Endothelial cell of umbilical vein (primary cell): ENCODE measurements at regions of chr11 and their contacts with region 1.

Region 1: DNA sequence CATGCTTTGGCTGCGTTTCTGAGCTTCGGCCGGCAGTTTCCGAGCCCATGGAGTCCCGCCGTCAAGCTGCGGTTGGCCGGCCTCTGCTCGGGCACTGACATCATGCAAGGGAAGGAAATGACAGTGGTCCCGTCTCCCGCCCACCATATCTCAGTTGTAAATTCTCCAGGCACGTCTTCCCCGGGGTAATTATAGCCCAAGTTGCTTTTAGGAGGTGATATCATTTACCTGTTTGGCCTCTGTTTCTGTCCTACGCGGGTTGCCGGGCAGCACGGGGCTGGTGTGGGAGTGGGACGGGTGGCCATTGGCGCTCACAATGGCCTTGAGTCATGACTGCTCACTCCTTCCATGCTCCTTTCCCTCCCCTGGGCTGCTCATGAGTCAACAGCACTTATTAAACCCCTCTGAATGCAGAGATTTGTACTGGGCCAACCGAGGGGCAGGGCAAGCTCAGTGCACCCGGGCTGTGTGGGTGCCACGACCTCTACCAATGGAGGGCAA is 4.2 kb upstream of the ANO1 start:
- DNase-seq: peak; percentile 81
- H3K4me3 ChIP-seq: no peak overlapping the region
- H3K27ac ChIP-seq: peak overlapping the region; percentile 45
- H3K4me1 ChIP-seq: peaks cover 17% of the 10 kb centered on the region
- H3K27me3 ChIP-seq: peaks cover 15 to 23% of the 10 kb centered on the region in 2 experiments
- CTCF ChIP-seq: no peak
- POLR2A ChIP-seq: no peak

Region 2: GRCh38 chr11:69950120-69950519 is 123.8 kb before region 1 on chr11:
- CTCF ChIA-PET with region 1: interaction called, 3 read pairs
- POLR2A ChIA-PET with region 1: no interaction called
- dilution Hi-C with region 1: no loop called
- intact Hi-C with region 1: loop called (anchors 10 kb)
- DNase-seq: peak; percentile 12
- H3K4me3 ChIP-seq: no peak overlapping the region
- H3K27ac ChIP-seq: peak overlapping the region; percentile 36
- H3K4me1 ChIP-seq: peaks cover 20% of the 10 kb centered on the region
- H3K27me3 ChIP-seq: peaks cover 0 to 2% of the 10 kb centered on the region in 2 experiments
- CTCF ChIP-seq: peak; percentile 45 to 50
- POLR2A ChIP-seq: no peak

Region 3: DNA sequence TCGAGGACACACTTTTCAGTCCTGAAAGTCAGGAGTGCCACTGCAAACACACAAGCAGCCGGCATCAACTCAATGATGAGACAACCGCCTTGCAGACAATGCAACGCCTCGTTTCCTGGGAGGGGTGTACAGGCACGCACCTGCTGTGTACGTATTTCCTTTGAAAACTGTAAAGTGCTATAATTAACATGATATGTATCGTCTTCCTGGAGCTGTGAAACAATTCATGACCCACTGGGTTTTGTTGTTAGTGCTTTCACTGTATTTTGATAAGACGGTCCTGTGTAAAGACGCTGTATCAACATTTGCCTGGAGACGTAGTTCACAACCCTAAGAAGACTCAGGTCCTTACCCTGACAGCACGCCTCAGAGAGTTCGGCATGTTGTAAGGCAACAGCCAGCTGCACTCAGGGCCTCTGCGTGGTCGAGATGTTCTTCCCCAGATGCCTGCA is 101.5 kb before region 1 on chr11:
- CTCF ChIA-PET with region 1: no interaction called
- POLR2A ChIA-PET with region 1: no interaction called
- dilution Hi-C with region 1: no loop called
- intact Hi-C with region 1: loop called (anchors 10 kb)
- DNase-seq: no peak
- H3K4me3 ChIP-seq: no peak overlapping the region
- H3K27ac ChIP-seq: no peak overlapping the region
- H3K4me1 ChIP-seq: peaks cover 8% of the 10 kb centered on the region
- H3K27me3 ChIP-seq: no peaks in the 10 kb centered on the region
- CTCF ChIP-seq: no peak
- POLR2A ChIP-seq: no peak

Region 4: DNA sequence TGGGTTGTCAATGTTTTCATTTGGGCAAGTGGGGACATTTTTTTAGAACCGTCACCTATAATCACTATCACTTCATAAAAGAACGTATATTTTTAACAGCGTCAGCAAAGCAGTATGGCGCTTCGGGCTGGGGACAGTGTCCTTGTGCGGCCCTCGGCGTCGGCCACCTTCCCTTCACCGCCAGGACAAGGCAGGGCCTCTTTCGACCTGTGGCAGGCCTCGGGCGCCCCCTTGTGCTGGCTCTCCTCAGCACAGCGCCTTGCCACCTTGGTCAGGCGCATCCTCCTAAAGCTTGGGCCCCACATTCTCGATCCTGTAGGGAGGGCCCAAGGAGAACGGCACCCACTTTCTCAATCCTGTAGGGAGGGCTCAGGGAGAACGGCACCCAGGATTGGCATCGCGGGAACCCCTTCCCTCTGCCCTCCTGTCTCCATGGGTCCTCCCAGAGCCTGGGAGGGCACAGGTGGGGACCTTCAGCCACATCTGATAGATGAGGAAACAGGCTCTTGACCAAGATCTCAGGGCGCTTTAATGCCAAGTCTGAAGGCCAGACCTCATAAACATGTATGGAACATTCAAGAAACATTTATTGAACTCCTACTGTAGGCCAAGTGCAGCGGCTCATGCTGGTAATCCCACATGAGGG is 117.7 kb after region 1 on chr11:
- CTCF ChIA-PET with region 1: no interaction called
- POLR2A ChIA-PET with region 1: no interaction called
- dilution Hi-C with region 1: no loop called
- intact Hi-C with region 1: no loop called
- DNase-seq: peak; percentile 54
- H3K4me3 ChIP-seq: no peak overlapping the region
- H3K27ac ChIP-seq: no peak overlapping the region
- H3K4me1 ChIP-seq: no peaks in the 10 kb centered on the region
- H3K27me3 ChIP-seq: no peaks in the 10 kb centered on the region
- CTCF ChIP-seq: peak; percentile 84 to 98
- POLR2A ChIP-seq: no peak